Activated CD4-positive, alpha-beta T cell treated with anti-CD3 and anti-CD28 coated beads, Interleukin-2, amount 10 ng/mL, durations not matched to agents 24 days and 14 days (primary cell): ENCODE measurements at regions of chr1 and their contacts with region 1.

Region 1: GRCh38 chr1:183841950-183842794 is 37.3 kb downstream of the RGL1 start:
- DNase-seq: peak; percentile 78
- H3K4me3 Mint-ChIP-seq: peak overlapping the region; percentile 65
- H3K27ac Mint-ChIP-seq: peak overlapping the region; percentile 93
- H3K4me1 Mint-ChIP-seq: peaks cover 26% of the 10 kb centered on the region
- H3K27me3 Mint-ChIP-seq: no peaks in the 10 kb centered on the region

Region 2: GRCh38 chr1:183543619-183544204 is 298.5 kb before region 1 on chr1:
- intact Hi-C with region 1: no loop called
- DNase-seq: peak; percentile 77
- H3K4me3 Mint-ChIP-seq: no peak overlapping the region
- H3K27ac Mint-ChIP-seq: peak overlapping the region; percentile 12
- H3K4me1 Mint-ChIP-seq: peaks cover 12% of the 10 kb centered on the region
- H3K27me3 Mint-ChIP-seq: no peaks in the 10 kb centered on the region

Region 3: DNA sequence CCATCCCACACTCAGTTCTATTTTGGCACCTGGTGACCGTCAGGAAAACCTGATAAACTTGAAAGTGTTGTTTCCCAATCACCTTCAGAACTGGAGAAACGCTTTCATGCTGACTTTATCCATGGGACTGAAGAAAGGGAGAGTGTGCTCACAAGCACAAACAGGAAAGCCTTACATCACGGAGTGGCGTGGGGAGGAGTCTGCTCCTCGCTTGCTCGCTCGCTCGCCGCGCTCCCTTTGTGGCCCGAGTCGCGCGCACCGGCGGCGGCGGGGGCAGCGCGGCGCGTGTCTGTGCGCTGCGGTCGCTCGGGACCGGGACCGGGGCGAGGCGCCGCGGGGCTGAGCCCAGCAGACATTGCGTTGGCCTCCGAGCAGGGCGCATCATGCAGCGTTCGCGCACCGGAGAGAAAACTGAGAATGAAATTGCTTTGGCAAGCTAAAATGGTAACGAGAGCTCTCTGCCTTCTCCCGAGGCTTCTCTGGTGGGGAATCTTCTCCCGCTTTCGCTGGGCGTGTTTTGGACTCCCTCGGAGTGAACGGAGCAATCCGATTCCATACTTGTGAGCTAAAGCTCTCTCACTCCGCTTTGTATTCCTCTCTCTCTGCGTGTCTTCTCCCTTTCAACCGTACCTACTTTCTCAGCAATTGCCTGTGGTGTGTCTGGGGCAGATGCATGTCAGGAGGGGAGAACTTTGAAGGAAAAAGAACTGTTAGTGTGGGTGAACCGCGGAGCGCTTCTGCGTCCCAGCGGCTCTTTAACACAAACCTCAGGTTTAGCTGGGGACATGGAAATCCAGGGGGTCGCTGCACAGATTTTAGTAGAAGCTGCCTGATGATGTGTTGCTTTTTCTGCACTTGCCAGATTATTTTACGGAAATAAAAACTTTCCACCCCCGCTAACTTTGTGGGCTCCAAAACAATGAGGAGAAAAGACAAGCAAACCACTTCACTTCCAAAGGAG is 37.0 kb before region 1 on chr1 and contains the start of gene RGL1:
- intact Hi-C with region 1: loop called (anchors 5 kb)
- DNase-seq: peak; percentile 81
- H3K4me3 Mint-ChIP-seq: peak within 1 kb of the TSS; percentile 87
- H3K27ac Mint-ChIP-seq: peak within 1 kb of the TSS; percentile 26
- H3K4me1 Mint-ChIP-seq: peaks cover 11% of the 10 kb centered on the region
- H3K27me3 Mint-ChIP-seq: peaks cover 3% of the 10 kb centered on the region
- total RNA-seq, gene RGL1: 1.7 and 2.0 TPM in 2 replicates

Region 4: DNA sequence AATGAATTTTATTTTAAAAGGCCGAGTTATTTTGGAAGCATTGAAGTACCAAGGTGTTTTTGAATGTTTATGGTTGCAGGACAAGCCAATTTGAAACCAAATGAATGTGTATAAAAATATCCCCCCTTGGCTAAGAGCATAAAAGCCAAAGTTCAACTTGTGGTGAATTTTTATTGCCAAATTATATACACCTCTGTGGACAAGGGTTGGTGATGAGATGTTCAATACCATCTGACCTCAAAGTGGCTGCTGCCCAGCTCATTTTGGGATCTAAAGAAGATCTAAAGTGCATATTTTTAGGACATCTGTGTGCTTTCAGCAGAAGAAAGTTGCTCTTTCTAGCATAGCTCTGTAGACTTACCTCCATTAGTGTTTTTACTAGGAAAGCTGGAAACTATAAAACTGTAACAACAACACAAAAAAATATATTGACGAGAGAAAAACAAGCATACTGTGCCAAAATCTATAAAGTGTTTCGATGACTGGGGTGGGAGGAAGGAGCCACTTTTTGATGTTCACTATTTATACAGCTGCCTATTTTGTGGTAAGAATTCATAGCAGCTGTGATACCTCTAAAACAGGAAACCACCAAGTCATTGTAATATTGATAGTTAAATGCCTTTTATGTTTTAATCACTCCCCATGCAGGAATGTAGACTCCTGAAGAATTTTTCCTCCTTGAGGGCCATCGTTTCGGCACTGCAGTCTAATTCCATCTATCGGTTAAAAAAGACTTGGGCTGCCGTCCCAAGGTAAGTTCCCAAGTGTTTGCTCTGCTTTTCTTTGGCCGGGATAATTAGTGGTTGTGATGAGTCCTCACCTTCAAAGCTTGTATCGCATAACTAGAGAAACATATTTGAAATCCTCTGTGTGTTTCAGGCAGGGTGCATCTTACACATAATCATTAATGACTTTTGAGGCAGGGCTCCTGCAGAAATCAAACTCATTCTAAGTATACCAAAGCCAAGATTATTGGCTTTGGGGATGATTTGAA is 46.0 kb after region 1 on chr1:
- intact Hi-C with region 1: loop called (anchors 5 kb)
- DNase-seq: no peak
- H3K4me3 Mint-ChIP-seq: peak overlapping the region; percentile 54
- H3K27ac Mint-ChIP-seq: peak overlapping the region; percentile 42
- H3K4me1 Mint-ChIP-seq: peaks cover 26% of the 10 kb centered on the region
- H3K27me3 Mint-ChIP-seq: no peaks in the 10 kb centered on the region